ENCODE measurements at regions of chr3 and their contacts with region 1.

Region 1: GRCh38 chr3:50260027-50260941 is 8.7 kb upstream of the SEMA3B start:
- DNase-seq: no peak
- H3K4me3 ChIP-seq: peak overlapping the region; percentile 56
- H3K27ac ChIP-seq: peak overlapping the region; percentile 89
- H3K27me3 ChIP-seq: no peaks in the 10 kb centered on the region
- CTCF ChIP-seq: peak; percentile 81

Region 2: GRCh38 chr3:50156549-50157493 is 103.5 kb before region 1 on chr3:
- CTCF ChIA-PET with region 1: no interaction called
- POLR2A ChIA-PET with region 1: no interaction called
- DNase-seq: no peak
- H3K4me3 ChIP-seq: peak overlapping the region; percentile 69
- H3K27ac ChIP-seq: no peak overlapping the region
- H3K27me3 ChIP-seq: peaks cover 6% of the 10 kb centered on the region
- CTCF ChIP-seq: no peak

Region 3: GRCh38 chr3:50235716-50236496 is 24.4 kb before region 1 on chr3 and contains the start of gene GNAI2:
- CTCF ChIA-PET with region 1: interaction called, 8 read pairs
- POLR2A ChIA-PET with region 1: interaction called, 18 read pairs
- DNase-seq: peak; percentile 94
- H3K4me3 ChIP-seq: peak within 1 kb of the TSS; percentile 95
- H3K27ac ChIP-seq: peak within 1 kb of the TSS; percentile 47
- H3K27me3 ChIP-seq: no peaks in the 10 kb centered on the region
- CTCF ChIP-seq: no peak
- polyA plus RNA-seq, gene GNAI2: 603 and 661 TPM in 2 replicates

Region 4: GRCh38 chr3:50245831-50246516 is 14.3 kb before region 1 on chr3:
- CTCF ChIA-PET with region 1: interaction called, 35 read pairs
- POLR2A ChIA-PET with region 1: interaction called, 6 read pairs
- DNase-seq: no peak
- H3K4me3 ChIP-seq: peak overlapping the region; percentile 49
- H3K27ac ChIP-seq: peak overlapping the region; percentile 91
- H3K27me3 ChIP-seq: no peaks in the 10 kb centered on the region
- CTCF ChIP-seq: peak; percentile 97

Region 5: GRCh38 chr3:50278868-50279224 is 18.6 kb after region 1 on chr3 and contains the start of gene LSMEM2:
- CTCF ChIA-PET with region 1: interaction called, 9 read pairs
- POLR2A ChIA-PET with region 1: interaction called, 13 read pairs
- DNase-seq: no peak
- H3K4me3 ChIP-seq: no peak within 1 kb of the TSS
- H3K27ac ChIP-seq: no peak within 1 kb of the TSS
- H3K27me3 ChIP-seq: peaks cover 19% of the 10 kb centered on the region
- CTCF ChIP-seq: no peak
- polyA plus RNA-seq, gene LSMEM2: not detected in 2 replicates

Region 6: GRCh38 chr3:50327943-50328691 is 67.8 kb after region 1 on chr3 and contains the start of gene TUSC2:
- CTCF ChIA-PET with region 1: interaction called, 10 read pairs
- POLR2A ChIA-PET with region 1: no interaction called
- DNase-seq: peak; percentile 82
- H3K4me3 ChIP-seq: peak within 1 kb of the TSS; percentile 87
- H3K27ac ChIP-seq: peak within 1 kb of the TSS; percentile 73
- H3K27me3 ChIP-seq: no peaks in the 10 kb centered on the region
- CTCF ChIP-seq: no peak
- polyA plus RNA-seq, gene TUSC2: 25.3 and 28.1 TPM in 2 replicates